Activated T-helper 2 cell treated with anti-CD3 and anti-CD28 coated beads, Interferon-gamma antibody, Interleukin-2, Interleukin-4, amounts not matched to agents 10 μg/mL and 5 μg/mL and 100 μg/mL, durations not matched to agents 14 hours and 24 hours and 36 hours (primary cell): ENCODE measurements at regions of chr13 and their contacts with region 1.

Region 1: GRCh38 chr13:111066544-111066943 is 48.6 kb upstream of the ARHGEF7 start:
- DNase-seq: no peak
- H3K4me3 Mint-ChIP-seq: peak overlapping the region; percentile 60
- H3K27ac Mint-ChIP-seq: no peak overlapping the region
- H3K4me1 Mint-ChIP-seq: peaks cover 8% of the 10 kb centered on the region
- H3K27me3 Mint-ChIP-seq: peaks cover 58% of the 10 kb centered on the region

Region 2: DNA sequence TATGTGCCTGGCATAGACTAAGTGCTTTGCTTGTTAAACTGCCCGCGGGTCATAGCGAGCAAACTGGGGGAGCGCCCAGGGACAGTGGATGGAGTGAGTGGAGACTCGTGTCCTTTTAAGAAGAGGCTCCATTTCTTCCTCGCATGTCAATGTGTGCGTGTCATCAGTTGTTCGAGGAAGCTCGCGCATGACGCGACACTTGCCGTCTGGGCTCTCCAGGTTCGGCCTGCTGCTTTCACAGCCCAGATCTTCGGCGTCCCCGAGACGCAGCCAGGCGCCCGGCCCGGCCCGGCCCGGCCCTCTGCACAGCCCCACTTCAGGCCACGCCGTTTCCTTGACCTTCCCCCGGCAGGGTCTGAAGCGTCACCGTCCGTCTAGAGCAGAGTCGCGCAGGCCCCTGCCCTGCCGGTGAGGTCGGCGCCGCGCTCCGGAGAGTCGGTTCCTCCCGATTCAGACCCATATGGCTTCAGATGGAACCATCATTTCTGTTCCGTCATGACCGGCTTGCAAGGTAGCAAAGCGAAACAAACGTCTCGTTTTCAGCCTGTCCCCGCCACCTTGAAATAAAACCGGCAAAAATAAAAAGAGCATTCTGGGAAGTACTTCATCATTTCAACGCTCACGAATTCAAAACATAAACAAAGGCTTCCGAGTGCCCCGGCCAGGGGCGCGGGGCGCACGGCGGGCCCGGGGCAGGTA is 48.0 kb after region 1 on chr13:
- intact Hi-C with region 1: loop called (anchors 5 kb)
- DNase-seq: no peak
- H3K4me3 Mint-ChIP-seq: peak overlapping the region; percentile 83
- H3K27ac Mint-ChIP-seq: no peak overlapping the region
- H3K4me1 Mint-ChIP-seq: peaks cover 13% of the 10 kb centered on the region
- H3K27me3 Mint-ChIP-seq: peaks cover 78% of the 10 kb centered on the region

Region 3: GRCh38 chr13:111219280-111219679 is 152.7 kb after region 1 on chr13:
- intact Hi-C with region 1: loop called (anchors 2 kb)
- DNase-seq: no peak
- H3K4me3 Mint-ChIP-seq: no peak overlapping the region
- H3K27ac Mint-ChIP-seq: peak overlapping the region; percentile 30
- H3K4me1 Mint-ChIP-seq: peaks cover 16% of the 10 kb centered on the region
- H3K27me3 Mint-ChIP-seq: no peaks in the 10 kb centered on the region